ENCODE measurements at regions of chr19 and their contacts with region 1.

Region 1: DNA sequence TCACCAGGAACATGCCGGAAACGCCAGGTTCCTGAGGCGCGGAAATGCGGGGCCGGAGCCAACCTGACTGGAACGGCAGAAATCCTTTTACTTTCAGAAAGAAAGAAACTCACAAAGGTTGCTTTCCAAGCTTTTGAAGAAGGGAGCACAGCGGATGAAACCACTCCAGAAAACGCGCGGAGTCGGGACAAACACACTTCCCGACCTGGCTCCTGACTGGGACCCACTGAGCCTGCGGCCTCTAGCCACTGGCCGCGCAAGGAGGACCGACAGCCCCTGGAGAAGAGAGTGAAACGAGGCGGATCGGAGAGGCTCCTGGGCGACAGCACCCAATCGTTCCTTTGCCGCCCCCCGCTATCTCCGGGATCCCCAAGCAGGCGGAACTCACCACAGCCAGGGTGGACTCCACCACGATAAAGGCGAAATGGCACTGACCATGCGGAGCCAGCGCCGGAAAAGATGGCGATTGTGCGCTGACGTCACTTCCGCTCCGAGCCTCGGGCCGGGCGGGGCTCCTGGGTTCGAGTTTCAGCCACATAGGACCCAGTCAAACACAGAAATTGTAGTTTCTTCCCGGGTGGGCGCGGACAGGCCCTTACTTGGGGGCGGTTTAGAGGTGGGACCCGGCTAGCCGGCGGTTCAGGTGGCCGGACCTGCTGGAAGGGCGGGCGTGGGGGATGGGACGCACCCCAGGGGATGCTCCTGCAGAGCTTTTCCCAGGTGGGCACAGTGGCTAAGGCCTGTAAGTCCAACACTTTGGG is at the start of gene ZNF121:
- DNase-seq: peak; percentile 80
- ATAC-seq: peak; percentile 84
- H3K4me3 Mint-ChIP-seq: peak within 1 kb of the TSS; percentile 95
- H3K27ac Mint-ChIP-seq: peak within 1 kb of the TSS; percentile 94
- H3K4me1 Mint-ChIP-seq: peaks cover 46% of the 10 kb centered on the region
- H3K27me3 Mint-ChIP-seq: peaks cover 6% of the 10 kb centered on the region
- CTCF ChIP-seq: no peak
- total RNA-seq, gene ZNF121: 53.7 and 57.0 TPM in 2 replicates

Region 2: GRCh38 chr19:9309139-9309973 is 274.9 kb before region 1 on chr19 and contains the start of gene ZNF699:
- CTCF ChIA-PET with region 1: interaction called, 3 read pairs
- POLR2A ChIA-PET with region 1: no interaction called
- intact Hi-C with region 1: loop called (anchors 5 kb)
- DNase-seq: peak; percentile 94
- ATAC-seq: peak; percentile 88
- H3K4me3 Mint-ChIP-seq: peak within 1 kb of the TSS; percentile 96
- H3K27ac Mint-ChIP-seq: peak within 1 kb of the TSS; percentile 98
- H3K4me1 Mint-ChIP-seq: peaks cover 24% of the 10 kb centered on the region
- H3K27me3 Mint-ChIP-seq: no peaks in the 10 kb centered on the region
- CTCF ChIP-seq: no peak
- total RNA-seq, gene ZNF699: 10.3 and 11.7 TPM in 2 replicates

Region 3: DNA sequence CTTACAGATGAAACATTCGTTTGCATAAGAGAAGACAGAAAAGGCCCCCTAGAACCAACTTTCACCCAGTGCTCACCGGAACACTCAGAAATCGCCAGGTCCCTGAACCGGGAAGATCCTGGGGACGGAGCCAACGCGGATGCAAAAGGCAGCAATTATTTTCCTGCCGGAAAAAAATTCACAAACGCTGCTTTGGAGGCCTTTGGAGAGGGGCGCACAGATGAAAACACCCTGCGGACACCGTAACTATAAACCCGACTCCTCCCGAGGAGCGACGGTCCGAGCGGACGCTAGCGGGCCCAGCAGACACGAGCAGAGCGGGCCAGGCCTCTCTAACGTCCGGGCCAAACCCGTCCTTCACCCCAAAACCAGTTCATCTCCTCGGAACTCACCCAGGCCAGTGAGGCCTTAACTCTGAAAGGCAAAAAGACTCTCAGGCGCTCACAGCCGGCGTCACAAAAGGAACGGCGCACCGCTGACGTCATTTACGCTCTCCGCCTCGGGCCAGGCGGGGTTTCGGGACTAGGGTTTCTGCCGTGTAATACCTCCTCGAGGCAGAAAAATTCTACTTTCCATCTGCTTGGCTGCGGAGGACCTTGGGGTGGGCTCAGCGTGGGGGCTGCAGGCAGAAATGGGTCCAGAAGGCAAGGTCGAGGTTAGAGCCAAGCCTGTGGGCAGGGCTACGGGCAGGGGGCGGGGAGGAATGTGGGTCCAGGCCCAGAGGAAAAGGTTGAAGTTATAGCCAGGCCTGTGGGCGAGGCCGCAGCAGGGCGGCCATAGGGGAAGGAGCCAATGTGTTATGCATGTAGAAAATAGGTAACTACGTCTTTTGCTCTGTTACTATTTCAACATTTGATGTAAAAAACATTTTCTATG is 45.8 kb before region 1 on chr19 and contains the start of gene ZNF426:
- CTCF ChIA-PET with region 1: no interaction called
- POLR2A ChIA-PET with region 1: interaction called, 8 read pairs
- intact Hi-C with region 1: loop called (anchors 10 kb)
- DNase-seq: peak; percentile 79
- ATAC-seq: peak; percentile 92
- H3K4me3 Mint-ChIP-seq: peak within 1 kb of the TSS; percentile 98
- H3K27ac Mint-ChIP-seq: peak within 1 kb of the TSS; percentile 99
- H3K4me1 Mint-ChIP-seq: peaks cover 26% of the 10 kb centered on the region
- H3K27me3 Mint-ChIP-seq: no peaks in the 10 kb centered on the region
- CTCF ChIP-seq: no peak
- total RNA-seq, gene ZNF426: 18.8 and 22.7 TPM in 2 replicates